ENCODE measurements at regions of chr12 and their contacts with region 1.

Region 1: DNA sequence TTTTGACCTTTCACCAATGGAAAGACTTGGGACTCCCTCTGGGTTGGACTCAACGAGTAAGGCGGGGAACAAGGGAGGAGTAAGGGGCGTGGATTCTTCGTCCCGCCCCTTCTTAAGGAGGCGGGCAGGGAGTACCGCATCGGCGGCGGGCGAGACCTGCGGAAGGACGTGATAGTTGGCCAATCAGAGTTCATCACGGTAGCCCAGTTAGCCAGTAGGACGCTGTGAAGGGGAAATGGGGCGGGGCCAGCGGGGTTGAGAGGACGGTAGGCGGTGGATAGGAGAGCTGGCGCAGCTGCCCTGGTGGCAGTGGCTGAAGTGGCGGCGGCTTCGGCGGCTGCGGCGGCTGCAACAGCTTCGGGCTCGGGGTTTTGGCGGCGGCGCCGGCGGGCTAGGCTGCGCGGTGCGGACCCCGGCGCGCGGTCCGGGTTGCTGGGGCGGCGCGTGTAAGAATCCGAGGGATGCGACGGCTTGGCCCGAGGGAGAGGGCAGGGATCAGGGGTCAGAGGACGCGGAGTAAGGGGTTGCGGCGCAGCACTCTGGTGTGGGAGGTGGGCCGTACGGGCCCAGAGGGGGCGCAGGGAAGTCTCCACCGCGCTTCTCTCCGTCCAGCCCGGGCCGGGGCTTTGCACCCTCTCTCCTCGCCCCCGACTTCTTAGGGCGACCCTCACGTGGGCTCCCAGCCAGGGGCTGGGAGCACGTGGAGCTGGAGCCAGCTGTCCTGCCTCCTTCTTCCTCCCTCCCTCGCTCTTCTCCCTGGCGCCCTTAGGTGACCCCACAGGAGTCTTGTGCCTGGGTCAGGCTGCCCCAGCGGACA is at the start of gene TPCN1:
- DNase-seq: peak; percentile 100
- H3K4me3 Mint-ChIP-seq: peak within 1 kb of the TSS; percentile 95
- H3K27ac Mint-ChIP-seq: peak within 1 kb of the TSS; percentile 92
- H3K4me1 Mint-ChIP-seq: peaks cover 19% of the 10 kb centered on the region
- H3K27me3 Mint-ChIP-seq: no peaks in the 10 kb centered on the region
- CTCF ChIP-seq: no peak
- total RNA-seq, gene TPCN1: 42.7 and 43.0 TPM in 2 replicates

Region 2: DNA sequence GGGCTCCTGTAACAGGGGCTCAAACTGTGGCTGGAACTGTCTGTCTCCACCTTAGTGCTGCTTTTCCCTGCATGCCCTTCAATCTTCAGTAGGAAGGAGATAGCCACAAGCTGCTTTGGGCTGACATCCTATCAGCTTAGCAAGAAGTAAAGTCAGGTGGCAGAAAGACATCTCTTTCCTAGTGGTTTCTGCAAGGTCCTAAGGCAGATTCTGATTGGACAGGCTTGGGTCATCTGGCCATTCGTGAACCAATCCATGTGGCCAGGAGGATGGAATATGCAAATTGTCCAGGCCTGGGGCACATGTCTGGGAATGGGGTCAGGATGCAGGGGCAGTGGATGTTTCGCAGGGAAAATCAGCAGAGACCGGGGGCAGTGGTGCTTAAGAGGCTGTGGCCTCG is 30.6 kb before region 1 on chr12:
- CTCF ChIA-PET with region 1: interaction called, 4 read pairs
- POLR2A ChIA-PET with region 1: interaction called, 32 read pairs
- intact Hi-C with region 1: no loop called
- DNase-seq: peak; percentile 49
- H3K4me3 Mint-ChIP-seq: no peak overlapping the region
- H3K27ac Mint-ChIP-seq: no peak overlapping the region
- H3K4me1 Mint-ChIP-seq: peaks cover 24% of the 10 kb centered on the region
- H3K27me3 Mint-ChIP-seq: no peaks in the 10 kb centered on the region
- CTCF ChIP-seq: no peak

Region 3: DNA sequence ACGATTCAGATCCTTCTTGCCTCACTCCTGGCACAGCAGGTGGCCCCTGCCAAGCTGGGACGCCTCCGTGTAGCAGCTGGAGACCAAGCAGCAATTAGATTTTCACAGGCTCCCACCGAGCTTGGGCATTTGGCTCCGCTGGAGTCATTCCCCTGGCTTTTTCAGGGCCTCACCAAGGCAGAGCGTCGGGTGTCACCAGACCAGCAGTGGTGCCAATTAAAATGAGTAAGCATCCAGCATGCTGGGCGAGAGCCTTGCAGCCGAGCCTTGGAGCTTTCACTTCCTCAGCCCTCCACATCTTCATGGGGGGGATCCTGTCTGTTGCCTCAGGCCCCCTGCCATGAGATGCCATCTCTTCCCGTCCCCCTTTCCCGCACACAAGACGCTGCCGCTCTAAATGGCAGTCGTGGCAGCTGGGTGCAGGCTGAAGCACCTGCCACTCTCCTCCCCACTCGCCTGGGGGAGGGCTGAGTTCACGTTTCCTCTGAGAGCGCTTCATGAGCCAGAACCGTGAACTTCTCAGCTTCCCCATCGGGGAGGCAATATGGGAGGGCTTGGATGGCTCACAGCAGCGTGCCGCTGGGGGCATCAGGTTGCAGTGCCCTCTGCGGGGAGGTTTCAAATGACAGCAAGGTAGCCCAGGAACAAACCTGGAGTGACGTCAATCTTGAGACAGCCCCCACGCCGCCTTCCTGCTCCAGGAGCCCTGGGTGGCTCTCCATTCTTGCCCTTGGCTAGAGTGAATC is 11.6 kb after region 1 on chr12:
- CTCF ChIA-PET with region 1: interaction called, 5 read pairs
- POLR2A ChIA-PET with region 1: interaction called, 237 read pairs
- intact Hi-C with region 1: no loop called
- DNase-seq: peak; percentile 34
- H3K4me3 Mint-ChIP-seq: no peak overlapping the region
- H3K27ac Mint-ChIP-seq: no peak overlapping the region
- H3K4me1 Mint-ChIP-seq: peaks cover 6% of the 10 kb centered on the region
- H3K27me3 Mint-ChIP-seq: no peaks in the 10 kb centered on the region
- CTCF ChIP-seq: no peak

Region 4: GRCh38 chr12:113271853-113272561 is 50.6 kb after region 1 on chr12:
- CTCF ChIA-PET with region 1: interaction called, 4 read pairs
- POLR2A ChIA-PET with region 1: interaction called, 3 read pairs
- intact Hi-C with region 1: loop called (anchors 2 kb)
- DNase-seq: peak; percentile 68
- H3K4me3 Mint-ChIP-seq: no peak overlapping the region
- H3K27ac Mint-ChIP-seq: peak overlapping the region; percentile 67
- H3K4me1 Mint-ChIP-seq: peaks cover 16% of the 10 kb centered on the region
- H3K27me3 Mint-ChIP-seq: no peaks in the 10 kb centered on the region
- CTCF ChIP-seq: no peak

Region 5: GRCh38 chr12:113351089-113351488 is 129.7 kb after region 1 on chr12:
- CTCF ChIA-PET with region 1: no interaction called
- POLR2A ChIA-PET with region 1: no interaction called
- intact Hi-C with region 1: no loop called
- DNase-seq: no peak
- H3K4me3 Mint-ChIP-seq: no peak overlapping the region
- H3K27ac Mint-ChIP-seq: no peak overlapping the region
- H3K4me1 Mint-ChIP-seq: no peaks in the 10 kb centered on the region
- H3K27me3 Mint-ChIP-seq: peaks cover 11% of the 10 kb centered on the region
- CTCF ChIP-seq: no peak

Region 6: DNA sequence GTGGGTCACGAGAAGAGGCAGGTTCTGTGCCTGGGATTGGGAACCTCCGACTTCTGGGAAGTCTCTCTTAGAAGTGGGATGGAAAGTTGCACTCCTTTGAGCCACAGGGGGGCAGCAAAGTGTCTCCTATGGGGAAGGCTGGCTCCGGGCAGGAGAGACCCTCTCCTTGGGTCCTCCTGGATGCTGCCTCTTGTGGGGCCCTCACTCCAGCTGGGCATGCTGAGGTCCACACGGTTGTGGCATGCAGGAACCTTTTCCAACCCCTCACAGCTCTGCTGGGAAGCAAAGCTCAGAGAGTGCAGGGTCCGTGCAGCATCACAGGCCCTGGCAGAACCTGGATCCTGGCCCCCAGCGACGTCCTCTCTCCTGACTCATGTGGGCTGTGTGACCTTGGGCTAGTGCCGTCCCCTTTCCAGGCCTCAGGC is 218.2 kb after region 1 on chr12:
- CTCF ChIA-PET with region 1: no interaction called
- POLR2A ChIA-PET with region 1: no interaction called
- intact Hi-C with region 1: no loop called
- DNase-seq: peak; percentile 54
- H3K4me3 Mint-ChIP-seq: no peak overlapping the region
- H3K27ac Mint-ChIP-seq: no peak overlapping the region
- H3K4me1 Mint-ChIP-seq: no peaks in the 10 kb centered on the region
- H3K27me3 Mint-ChIP-seq: no peaks in the 10 kb centered on the region
- CTCF ChIP-seq: peak; percentile 58